Activated naive CD4-positive, alpha-beta T cell treated with anti-CD3 and anti-CD28 coated beads for 36 hours (primary cell): ENCODE measurements at regions of chr18 and their contacts with region 1.

Region 1: DNA sequence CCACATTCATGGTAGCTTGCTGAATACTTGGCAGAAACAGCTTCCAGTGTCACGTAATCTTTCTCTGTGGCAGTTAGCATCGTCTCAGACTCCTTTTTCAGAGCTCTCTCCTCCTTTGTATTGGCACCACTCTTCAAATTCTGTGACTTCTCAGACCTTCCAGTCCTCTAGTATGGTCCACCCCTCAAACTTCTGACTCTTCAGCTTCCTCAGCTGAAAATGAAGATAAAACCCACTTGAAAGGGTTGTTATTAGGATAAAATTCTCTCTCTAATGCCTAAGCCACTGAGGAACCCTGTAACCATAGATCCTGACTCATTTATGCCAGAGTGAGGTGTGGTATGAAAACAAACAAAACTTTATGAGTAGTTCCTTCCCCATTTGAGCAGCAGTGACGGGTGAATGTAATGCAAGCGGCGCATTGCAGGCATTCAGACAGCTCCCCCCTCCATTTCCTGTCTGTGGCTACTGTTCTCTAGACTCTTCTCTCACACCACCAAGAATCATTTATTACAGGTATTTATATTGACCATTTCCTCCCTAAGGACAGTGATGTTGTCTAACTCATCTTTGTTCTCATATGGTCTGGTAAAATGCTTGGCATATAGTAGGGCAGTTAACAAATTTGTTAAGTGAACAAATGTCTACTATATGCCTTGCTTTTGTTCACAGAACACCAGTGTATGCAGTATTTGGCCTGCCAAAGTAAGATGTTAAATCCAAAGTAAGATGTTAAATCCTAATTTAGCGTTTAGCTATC is 35.3 kb downstream of the GALNT1 start:
- DNase-seq: peak; percentile 86
- H3K4me3 Mint-ChIP-seq: no peak overlapping the region
- H3K27ac Mint-ChIP-seq: no peak overlapping the region
- H3K4me1 Mint-ChIP-seq: peaks cover 22% of the 10 kb centered on the region
- H3K27me3 Mint-ChIP-seq: no peaks in the 10 kb centered on the region

Region 2: DNA sequence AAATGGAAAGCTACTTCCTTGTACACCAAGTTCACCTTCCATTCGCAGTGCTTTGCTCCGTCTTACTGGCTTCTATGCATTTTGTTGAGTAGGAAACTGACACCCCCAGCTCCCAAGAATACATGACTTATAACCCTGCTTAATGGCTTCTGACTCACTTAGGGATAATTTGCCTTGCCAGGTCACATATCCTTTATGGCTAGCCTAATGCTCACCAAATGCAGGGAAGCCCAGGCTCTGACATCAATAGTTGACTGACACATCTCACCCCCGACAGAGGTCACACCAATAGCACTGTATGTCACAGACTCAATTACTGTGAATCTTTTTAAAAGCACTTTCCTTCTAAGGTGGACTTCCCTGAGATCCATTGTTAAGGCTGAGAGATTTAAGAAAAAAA is 759.5 kb before region 1 on chr18:
- CTCF ChIA-PET with region 1: no interaction called
- intact Hi-C with region 1: loop called (anchors 1 kb)
- DNase-seq: no peak
- H3K4me3 Mint-ChIP-seq: no peak overlapping the region
- H3K27ac Mint-ChIP-seq: no peak overlapping the region
- H3K4me1 Mint-ChIP-seq: peaks cover 32% of the 10 kb centered on the region
- H3K27me3 Mint-ChIP-seq: peaks cover 11% of the 10 kb centered on the region

Region 3: DNA sequence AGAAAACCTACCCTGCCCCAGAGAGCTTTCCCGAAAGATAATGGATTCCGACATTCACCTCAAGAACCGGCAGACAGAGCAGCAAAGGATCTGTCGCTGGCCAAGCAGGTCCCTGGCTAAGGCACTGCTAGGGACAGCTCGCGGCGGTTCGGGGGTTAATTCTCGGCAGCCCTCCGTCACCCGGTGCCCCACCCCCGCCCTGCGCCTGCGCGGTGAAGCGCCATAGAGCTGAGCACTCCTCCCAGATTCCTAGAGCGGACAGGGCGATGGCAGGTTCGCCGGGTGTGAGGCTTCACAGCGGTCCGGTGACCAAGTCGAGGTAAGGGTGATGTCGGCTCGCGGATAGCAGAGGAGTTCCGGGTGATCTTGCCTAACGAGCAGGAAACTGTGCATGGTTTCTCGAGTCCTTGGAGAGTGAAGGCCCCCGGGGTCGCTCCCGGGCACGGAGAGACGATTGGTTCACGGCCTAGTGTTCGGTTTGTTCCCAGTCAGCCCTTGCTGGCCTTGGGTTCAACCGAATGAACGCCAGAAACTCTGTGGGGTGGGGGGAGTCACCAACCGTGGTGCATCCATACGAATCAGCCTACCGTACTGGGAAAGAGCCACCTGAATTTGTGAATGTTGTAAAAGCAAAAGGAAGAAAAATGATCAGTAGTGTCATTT is 326.6 kb before region 1 on chr18 and contains the start of gene ZSCAN30:
- CTCF ChIA-PET with region 1: no interaction called
- intact Hi-C with region 1: loop called (anchors 5 kb)
- DNase-seq: peak; percentile 96
- H3K4me3 Mint-ChIP-seq: peak within 1 kb of the TSS; percentile 96
- H3K27ac Mint-ChIP-seq: peak within 1 kb of the TSS; percentile 97
- H3K4me1 Mint-ChIP-seq: peaks cover 48% of the 10 kb centered on the region
- H3K27me3 Mint-ChIP-seq: peaks cover 2% of the 10 kb centered on the region
- total RNA-seq, gene ZSCAN30: 12.0 to 14.3 TPM

Region 4: GRCh38 chr18:35547008-35547605 is 69.7 kb before region 1 on chr18:
- CTCF ChIA-PET with region 1: no interaction called
- intact Hi-C with region 1: loop called (anchors 2 kb)
- DNase-seq: no peak
- H3K4me3 Mint-ChIP-seq: no peak overlapping the region
- H3K27ac Mint-ChIP-seq: peak overlapping the region; percentile 9
- H3K4me1 Mint-ChIP-seq: peaks cover 16% of the 10 kb centered on the region
- H3K27me3 Mint-ChIP-seq: no peaks in the 10 kb centered on the region

Region 5: GRCh38 chr18:35693829-35694228 is 77.0 kb after region 1 on chr18:
- CTCF ChIA-PET with region 1: no interaction called
- intact Hi-C with region 1: loop called (anchors 2 kb)
- DNase-seq: no peak
- H3K4me3 Mint-ChIP-seq: no peak overlapping the region
- H3K27ac Mint-ChIP-seq: no peak overlapping the region
- H3K4me1 Mint-ChIP-seq: no peaks in the 10 kb centered on the region
- H3K27me3 Mint-ChIP-seq: no peaks in the 10 kb centered on the region

Region 6: GRCh38 chr18:36129300-36130038 is 512.6 kb after region 1 on chr18 and contains the starts of genes ELP2 and SLC39A6:
- CTCF ChIA-PET with region 1: no interaction called
- intact Hi-C with region 1: loop called (anchors 10 kb)
- DNase-seq: peak; percentile 94
- H3K4me3 Mint-ChIP-seq: peak within 1 kb of the TSS; percentile 91
- H3K27ac Mint-ChIP-seq: peak within 1 kb of the TSS; percentile 92
- H3K4me1 Mint-ChIP-seq: peaks cover 61% of the 10 kb centered on the region
- H3K27me3 Mint-ChIP-seq: no peaks in the 10 kb centered on the region
- total RNA-seq, gene ELP2: 90.1 to 92.0 TPM
- total RNA-seq, gene SLC39A6: 15.4 to 15.7 TPM